ENCODE measurements at regions of chr10 and their contacts with region 1.

Region 1: DNA sequence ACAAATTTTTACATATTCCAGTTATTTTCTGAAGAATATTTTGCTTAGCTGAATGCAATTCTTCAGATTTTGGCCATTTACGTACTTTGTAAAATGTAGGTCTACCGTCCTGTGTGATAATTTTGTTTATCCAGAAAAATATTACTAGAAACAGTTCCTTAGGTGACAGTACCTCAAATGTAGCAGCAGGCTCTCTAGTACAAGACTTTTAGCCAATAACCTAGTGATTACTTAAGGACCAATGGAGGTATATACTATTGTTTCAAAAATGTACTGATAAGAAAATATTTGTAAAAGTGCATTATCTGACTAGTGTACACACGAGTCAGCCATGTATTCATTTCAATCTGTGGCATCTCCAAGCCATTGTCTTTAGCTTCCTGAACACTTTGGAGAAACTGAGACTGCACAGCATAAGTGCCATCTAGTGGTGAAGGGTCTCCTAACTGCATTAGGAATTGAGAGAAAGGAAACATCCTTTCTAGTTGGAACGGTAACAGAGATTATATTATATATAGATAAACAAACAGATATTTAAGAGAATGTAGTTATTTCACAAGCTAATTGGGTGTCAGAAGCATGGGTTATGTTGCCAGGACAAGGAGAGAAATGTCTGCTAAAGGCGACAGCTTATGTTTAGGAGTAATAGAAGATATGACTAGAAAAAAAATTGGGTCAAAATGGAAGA is 23.7 kb downstream of the RTKN2 start:
- DNase-seq: peak; percentile 77
- ATAC-seq: peak; percentile 85
- H3K4me3 Mint-ChIP-seq: no peak overlapping the region
- H3K27ac Mint-ChIP-seq: peak overlapping the region; percentile 58
- H3K4me1 Mint-ChIP-seq: peaks cover 36% of the 10 kb centered on the region
- H3K27me3 Mint-ChIP-seq: no peaks in the 10 kb centered on the region

Region 2: GRCh38 chr10:61896854-61897661 is 347.9 kb before region 1 on chr10:
- CTCF ChIA-PET with region 1: interaction called, 34 read pairs
- POLR2A ChIA-PET with region 1: interaction called, 13 read pairs
- DNase-seq: peak; percentile 82
- ATAC-seq: peak; percentile 72
- H3K4me3 Mint-ChIP-seq: peak overlapping the region; percentile 71
- H3K27ac Mint-ChIP-seq: peak overlapping the region; percentile 88
- H3K4me1 Mint-ChIP-seq: peaks cover 34% of the 10 kb centered on the region
- H3K27me3 Mint-ChIP-seq: no peaks in the 10 kb centered on the region

Region 3: GRCh38 chr10:61961278-61961677 is 283.6 kb before region 1 on chr10:
- CTCF ChIA-PET with region 1: interaction called, 16 read pairs
- POLR2A ChIA-PET with region 1: no interaction called
- DNase-seq: peak; percentile 59
- ATAC-seq: peak; percentile 89
- H3K4me3 Mint-ChIP-seq: peak overlapping the region; percentile 42
- H3K27ac Mint-ChIP-seq: peak overlapping the region; percentile 82
- H3K4me1 Mint-ChIP-seq: peaks cover 68% of the 10 kb centered on the region
- H3K27me3 Mint-ChIP-seq: no peaks in the 10 kb centered on the region

Region 4: DNA sequence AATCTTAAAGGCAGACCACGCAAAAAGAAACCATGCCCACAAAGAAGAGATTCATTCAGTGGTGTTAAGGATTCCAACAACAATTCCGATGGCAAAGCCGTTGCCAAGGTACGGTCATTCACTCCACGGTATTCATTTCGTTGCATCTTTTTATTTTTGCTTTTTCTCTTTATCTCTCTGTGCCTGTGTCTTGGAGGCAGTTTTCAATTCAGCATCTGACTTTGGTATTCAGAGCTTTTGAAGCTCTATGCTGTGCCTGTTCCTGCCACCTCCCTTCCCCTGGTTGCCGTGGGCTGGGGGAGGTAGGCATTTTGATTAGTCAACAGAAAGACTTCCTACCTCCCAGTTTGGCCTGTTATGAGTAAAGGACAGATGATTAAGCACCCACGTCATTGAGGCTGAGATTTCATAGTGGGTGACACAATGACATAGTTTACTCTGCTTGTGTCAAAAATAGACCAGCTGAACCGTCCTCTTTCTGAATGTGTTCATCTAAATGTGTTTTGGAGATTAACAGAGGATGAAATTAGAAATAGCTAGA is 194.0 kb before region 1 on chr10:
- CTCF ChIA-PET with region 1: interaction called, 21 read pairs
- POLR2A ChIA-PET with region 1: interaction called, 3 read pairs
- DNase-seq: peak; percentile 75
- ATAC-seq: peak; percentile 47
- H3K4me3 Mint-ChIP-seq: peak overlapping the region; percentile 77
- H3K27ac Mint-ChIP-seq: peak overlapping the region; percentile 95
- H3K4me1 Mint-ChIP-seq: peaks cover 99% of the 10 kb centered on the region
- H3K27me3 Mint-ChIP-seq: no peaks in the 10 kb centered on the region

Region 5: DNA sequence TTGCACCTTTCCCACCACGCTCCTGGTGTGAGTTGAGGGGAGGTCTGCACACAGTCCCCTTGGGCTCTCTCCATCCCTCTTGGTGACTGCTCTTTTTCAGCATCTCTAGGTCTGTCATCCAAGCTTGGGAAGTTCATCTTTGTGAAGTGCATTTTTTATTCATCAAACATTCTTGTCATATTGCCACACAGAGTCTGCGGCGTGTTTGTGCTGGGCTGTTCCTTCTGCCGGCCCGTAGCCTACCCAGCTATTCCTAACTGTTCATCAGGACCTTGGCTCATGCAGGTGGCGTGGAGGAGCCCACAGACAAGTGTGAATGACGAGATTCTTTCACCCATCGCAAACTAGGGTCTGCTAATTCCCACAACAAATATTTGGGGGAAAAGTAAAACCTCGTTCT is 141.1 kb before region 1 on chr10:
- CTCF ChIA-PET with region 1: interaction called, 10 read pairs
- POLR2A ChIA-PET with region 1: interaction called, 3 read pairs
- DNase-seq: no peak
- ATAC-seq: no peak
- H3K4me3 Mint-ChIP-seq: no peak overlapping the region
- H3K27ac Mint-ChIP-seq: no peak overlapping the region
- H3K4me1 Mint-ChIP-seq: peaks cover 26% of the 10 kb centered on the region
- H3K27me3 Mint-ChIP-seq: no peaks in the 10 kb centered on the region

Region 6: DNA sequence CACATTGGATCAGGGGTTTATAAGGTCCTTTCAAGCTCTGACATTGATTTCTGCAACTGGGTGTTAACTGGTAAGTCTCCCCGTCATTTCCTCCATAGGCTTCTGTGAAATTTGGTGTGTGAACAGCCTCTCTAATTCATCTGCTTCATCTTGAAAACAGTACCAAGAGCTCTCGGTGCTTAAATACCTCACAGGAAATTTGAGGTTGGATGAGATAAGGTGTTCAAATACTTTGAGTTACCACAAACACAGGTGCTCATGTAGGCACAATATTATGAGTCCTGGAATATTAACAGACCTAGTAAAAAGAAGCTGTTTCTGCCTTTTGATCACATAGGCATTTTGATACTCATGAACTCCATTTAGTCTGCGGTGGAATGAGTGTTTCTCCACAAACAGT is 61.5 kb before region 1 on chr10:
- CTCF ChIA-PET with region 1: interaction called, 44 read pairs
- POLR2A ChIA-PET with region 1: interaction called, 12 read pairs
- DNase-seq: peak; percentile 71
- ATAC-seq: peak; percentile 83
- H3K4me3 Mint-ChIP-seq: peak overlapping the region; percentile 50
- H3K27ac Mint-ChIP-seq: peak overlapping the region; percentile 87
- H3K4me1 Mint-ChIP-seq: peaks cover 82% of the 10 kb centered on the region
- H3K27me3 Mint-ChIP-seq: no peaks in the 10 kb centered on the region

Region 7: GRCh38 chr10:62278441-62278910 is 33.6 kb after region 1 on chr10:
- CTCF ChIA-PET with region 1: no interaction called
- POLR2A ChIA-PET with region 1: no interaction called
- DNase-seq: no peak
- ATAC-seq: no peak
- H3K4me3 Mint-ChIP-seq: no peak overlapping the region
- H3K27ac Mint-ChIP-seq: no peak overlapping the region
- H3K4me1 Mint-ChIP-seq: no peaks in the 10 kb centered on the region
- H3K27me3 Mint-ChIP-seq: peaks cover 13% of the 10 kb centered on the region

Region 8: DNA sequence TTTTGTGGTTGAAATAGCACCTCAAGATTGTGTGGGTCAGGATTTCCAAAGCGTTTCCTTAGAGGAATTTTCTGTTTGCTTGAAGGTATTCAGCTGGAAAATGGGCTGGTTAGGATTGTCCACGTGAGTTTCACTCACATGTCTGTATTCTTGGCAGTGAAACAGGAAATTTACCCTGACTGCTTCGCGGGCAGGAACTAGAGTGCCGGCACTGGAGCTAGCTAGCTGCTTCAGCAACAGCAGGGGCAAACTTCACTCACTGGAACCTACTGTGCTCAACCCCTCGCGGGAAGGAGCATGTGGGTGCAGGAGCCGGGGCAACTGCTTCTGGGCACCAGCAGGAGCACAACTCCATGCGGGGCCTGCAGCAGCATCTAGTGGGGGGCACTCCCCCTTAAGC is 61.7 kb after region 1 on chr10:
- CTCF ChIA-PET with region 1: no interaction called
- POLR2A ChIA-PET with region 1: no interaction called
- DNase-seq: no peak
- ATAC-seq: no peak
- H3K4me3 Mint-ChIP-seq: no peak overlapping the region
- H3K27ac Mint-ChIP-seq: no peak overlapping the region
- H3K4me1 Mint-ChIP-seq: no peaks in the 10 kb centered on the region
- H3K27me3 Mint-ChIP-seq: no peaks in the 10 kb centered on the region